Natural killer cell (primary cell): ENCODE measurements at regions of chr3 and their contacts with region 1.

Region 1: DNA sequence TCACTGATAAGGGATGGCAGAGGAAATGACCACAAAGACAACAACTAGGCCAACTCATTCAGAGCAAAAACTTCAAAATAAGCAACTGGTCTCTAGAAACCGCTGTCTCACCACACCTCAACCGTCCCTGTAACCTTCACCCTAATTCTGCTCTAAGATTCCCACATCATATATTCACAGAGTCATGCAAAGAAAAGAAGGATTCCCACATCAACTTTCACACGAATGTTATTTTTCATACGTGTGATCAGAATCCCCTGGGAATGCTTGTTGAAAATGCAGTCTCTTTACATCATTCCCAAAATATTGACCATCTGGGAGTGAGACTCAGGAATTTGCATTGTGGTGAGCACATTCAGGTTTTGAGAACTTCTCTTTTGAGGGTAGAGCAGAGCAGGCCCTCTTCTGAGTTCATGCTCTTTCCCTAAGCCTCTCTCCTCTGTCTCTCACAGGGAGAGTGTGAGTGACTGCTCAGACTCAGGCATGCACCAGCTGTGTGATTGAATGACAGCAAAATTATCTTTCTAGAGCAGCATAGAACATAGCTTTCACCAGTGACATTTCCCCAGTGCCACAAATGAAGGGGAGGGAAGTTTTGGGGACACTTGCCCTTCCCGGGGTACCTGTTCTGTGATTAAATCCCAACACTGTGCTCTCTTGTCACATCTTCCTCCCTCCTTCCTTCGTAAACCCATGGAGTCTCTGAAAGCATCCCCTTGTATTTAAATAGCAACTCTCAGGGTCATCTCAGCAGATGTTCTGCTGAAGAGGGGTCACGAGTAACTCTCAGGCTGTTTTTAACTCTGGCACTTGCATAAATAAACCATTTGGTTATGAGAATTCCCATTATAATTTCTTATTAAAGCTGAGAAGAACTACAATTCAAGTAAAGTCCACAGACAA is 170.9 kb downstream of the PLCL2 start:
- DNase-seq: no peak
- ATAC-seq: peak in 2 of 3 donors; percentile 52 to 74
- H3K4me3 ChIP-seq: no peak overlapping the region
- H3K4me3 Mint-ChIP-seq: peak overlapping the region; percentile 79
- H3K27ac ChIP-seq: peak overlapping the region; percentile 22
- H3K27ac Mint-ChIP-seq: peak overlapping the region; percentile 80 to 85
- H3K4me1 ChIP-seq: peaks cover 9% of the 10 kb centered on the region
- H3K4me1 Mint-ChIP-seq: peaks cover 57 to 62% of the 10 kb centered on the region in 2 donors
- H3K27me3 ChIP-seq: no peaks in the 10 kb centered on the region
- H3K27me3 Mint-ChIP-seq: no peaks in the 10 kb centered on the region
- CTCF ChIP-seq: no peak

Region 2: GRCh38 chr3:16768959-16769358 is 286.7 kb before region 1 on chr3:
- intact Hi-C with region 1: no loop called
- DNase-seq: no peak
- ATAC-seq: no peak
- H3K4me3 ChIP-seq: no peak overlapping the region
- H3K4me3 Mint-ChIP-seq: no peak overlapping the region
- H3K27ac ChIP-seq: no peak overlapping the region
- H3K27ac Mint-ChIP-seq: no peak overlapping the region
- H3K4me1 ChIP-seq: no peaks in the 10 kb centered on the region
- H3K4me1 Mint-ChIP-seq: peaks cover 11 to 12% of the 10 kb centered on the region in 2 donors
- H3K27me3 ChIP-seq: no peaks in the 10 kb centered on the region
- H3K27me3 Mint-ChIP-seq: peaks cover 0 to 11% of the 10 kb centered on the region in 2 donors
- CTCF ChIP-seq: no peak

Region 3: DNA sequence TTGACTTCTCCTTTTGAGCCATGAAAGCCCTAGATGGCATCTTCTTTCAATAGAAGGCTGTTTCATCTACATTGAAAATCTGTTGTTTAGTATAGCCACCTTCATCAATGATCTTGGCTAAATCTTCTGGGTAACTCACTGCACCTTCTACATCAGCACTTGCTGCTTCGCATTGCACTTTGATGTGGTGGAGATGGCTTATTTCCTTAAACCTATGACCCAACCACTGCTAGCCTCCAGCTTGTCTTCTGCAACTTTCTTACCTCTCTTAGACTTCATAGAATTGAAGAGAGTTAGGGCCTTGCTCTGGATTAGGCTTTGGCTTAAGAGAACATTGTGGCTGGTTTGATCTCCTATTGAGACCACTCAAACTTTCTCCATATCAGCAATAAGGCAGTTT is 18.9 kb after region 1 on chr3:
- intact Hi-C with region 1: loop called (anchors 2 kb)
- DNase-seq: peak in 1 of 2 donors; percentile 57
- ATAC-seq: peak; percentile 20 to 44 (median 40)
- H3K4me3 ChIP-seq: no peak overlapping the region
- H3K4me3 Mint-ChIP-seq: peak overlapping the region; percentile 75
- H3K27ac ChIP-seq: peak overlapping the region; percentile 43
- H3K27ac Mint-ChIP-seq: peak overlapping the region; percentile 79 to 84
- H3K4me1 ChIP-seq: peaks cover 41% of the 10 kb centered on the region
- H3K4me1 Mint-ChIP-seq: peaks cover 62 to 69% of the 10 kb centered on the region in 2 donors
- H3K27me3 ChIP-seq: no peaks in the 10 kb centered on the region
- H3K27me3 Mint-ChIP-seq: no peaks in the 10 kb centered on the region
- CTCF ChIP-seq: no peak

Region 4: GRCh38 chr3:17133632-17134540 is 78.3 kb after region 1 on chr3:
- intact Hi-C with region 1: no loop called
- DNase-seq: no peak
- ATAC-seq: no peak
- H3K4me3 ChIP-seq: no peak overlapping the region
- H3K4me3 Mint-ChIP-seq: no peak overlapping the region
- H3K27ac ChIP-seq: no peak overlapping the region
- H3K27ac Mint-ChIP-seq: no peak overlapping the region
- H3K4me1 ChIP-seq: no peaks in the 10 kb centered on the region
- H3K4me1 Mint-ChIP-seq: peaks cover 8 to 25% of the 10 kb centered on the region in 2 donors
- H3K27me3 ChIP-seq: no peaks in the 10 kb centered on the region
- H3K27me3 Mint-ChIP-seq: peaks cover 0 to 5% of the 10 kb centered on the region in 2 donors
- CTCF ChIP-seq: no peak